Right ventricle myocardium superior (tissue), 1 donor: ENCODE measurements at regions of chr2 and their contacts with region 1.

Region 1: DNA sequence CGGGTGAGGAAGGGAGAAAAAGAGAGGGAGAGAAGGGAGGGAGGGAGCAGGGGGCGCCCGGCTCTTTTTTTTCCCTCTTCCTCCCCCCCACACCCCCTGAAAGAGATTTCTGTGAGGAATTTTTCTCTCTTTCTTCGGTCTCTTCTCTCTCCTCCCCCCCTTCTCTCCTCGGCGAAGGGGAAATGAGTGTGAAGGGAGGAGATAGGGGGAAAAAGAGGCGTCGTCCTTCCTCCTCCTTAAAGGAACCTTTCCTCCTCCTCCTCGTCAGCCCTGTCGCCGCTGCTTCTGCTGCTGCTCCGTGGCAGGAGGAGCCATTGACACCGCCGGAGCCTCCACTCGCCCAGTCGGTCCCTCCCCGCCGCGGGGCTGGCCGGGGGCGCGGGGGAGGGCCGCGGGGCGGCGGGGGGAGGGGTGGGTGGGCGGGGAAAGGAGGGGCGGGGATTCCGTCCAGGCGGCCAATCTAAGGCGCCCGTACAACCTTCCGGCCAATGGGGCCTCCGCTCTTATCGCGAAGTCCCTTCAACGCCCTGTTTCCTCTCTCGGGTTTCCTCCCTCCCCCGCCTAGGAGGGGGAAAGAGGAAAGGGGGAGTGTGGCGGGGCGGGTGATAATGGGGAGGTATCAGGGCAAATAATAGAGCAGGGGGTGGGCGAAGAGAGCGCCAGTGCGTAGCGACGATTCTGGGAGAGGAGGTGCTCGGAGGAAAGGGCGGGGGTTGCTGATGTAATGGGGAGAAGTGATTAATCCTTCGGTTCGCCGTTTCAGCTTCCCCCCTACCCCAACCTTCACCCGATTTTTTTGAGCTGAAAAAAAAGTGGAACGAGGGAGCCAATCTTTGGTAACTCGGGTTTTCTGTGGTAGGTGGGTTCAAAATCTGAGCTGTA is at the start of gene FBXO11:
- DNase-seq: peak; percentile 96
- ATAC-seq: peak; percentile 93
- total RNA-seq, gene FBXO11: 38.2 TPM

Region 2: DNA sequence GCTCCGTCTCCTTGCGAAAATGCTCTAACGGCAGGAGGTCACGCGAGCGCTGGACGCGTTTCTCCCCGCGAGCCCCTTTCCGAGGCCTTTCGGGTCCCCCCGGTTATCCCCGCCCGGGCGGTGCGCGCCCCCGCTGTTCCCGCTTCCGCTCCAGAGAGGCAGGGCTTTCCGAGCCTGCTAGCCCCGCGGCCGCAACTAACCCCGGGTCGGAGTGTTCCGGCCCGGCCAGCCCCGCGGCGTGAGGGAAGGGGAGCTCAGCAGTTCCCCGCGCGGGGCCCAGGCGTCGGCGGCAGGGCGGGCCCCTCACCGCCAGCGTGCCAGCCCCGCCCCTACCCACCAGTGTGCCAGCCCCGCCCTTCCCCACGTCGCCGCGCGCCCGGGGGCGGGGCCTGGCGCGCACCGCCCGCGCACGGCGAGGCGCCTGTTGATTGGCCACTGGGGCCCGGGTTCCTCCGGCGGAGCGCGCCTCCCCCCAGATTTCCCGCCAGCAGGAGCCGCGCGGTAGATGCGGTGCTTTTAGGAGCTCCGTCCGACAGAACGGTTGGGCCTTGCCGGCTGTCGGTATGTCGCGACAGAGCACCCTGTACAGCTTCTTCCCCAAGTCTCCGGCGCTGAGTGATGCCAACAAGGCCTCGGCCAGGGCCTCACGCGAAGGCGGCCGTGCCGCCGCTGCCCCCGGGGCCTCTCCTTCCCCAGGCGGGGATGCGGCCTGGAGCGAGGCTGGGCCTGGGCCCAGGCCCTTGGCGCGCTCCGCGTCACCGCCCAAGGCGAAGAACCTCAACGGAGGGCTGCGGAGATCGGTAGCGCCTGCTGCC is 123.5 kb before region 1 on chr2 and contains the start of gene MSH6:
- intact Hi-C with region 1: loop called (anchors 10 kb)
- DNase-seq: peak; percentile 92
- ATAC-seq: peak; percentile 99
- total RNA-seq, gene MSH6: 25.0 TPM

Region 3: DNA sequence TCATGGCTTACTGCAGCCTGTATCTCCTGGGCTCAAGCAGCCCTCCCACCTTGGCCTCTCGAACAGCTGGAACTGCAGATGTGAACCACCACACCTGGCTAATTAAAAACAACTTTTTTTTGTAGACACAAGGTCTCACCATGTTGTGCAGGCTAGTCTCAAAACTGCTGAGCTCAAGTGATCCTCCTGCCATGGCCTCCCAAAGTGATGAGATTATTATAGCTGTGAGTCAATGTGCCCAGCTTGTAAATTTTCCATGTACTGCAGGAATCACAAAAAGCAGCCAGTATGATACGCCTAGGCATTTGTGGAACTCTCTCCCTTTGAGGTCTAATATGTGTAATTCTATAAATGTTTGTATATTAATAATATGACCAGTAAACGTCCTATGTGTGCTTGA is 63.6 kb before region 1 on chr2:
- intact Hi-C with region 1: loop called (anchors 10 kb)
- DNase-seq: no peak
- ATAC-seq: no peak